ENCODE measurements at regions of chr1 and their contacts with region 1.

Region 1: DNA sequence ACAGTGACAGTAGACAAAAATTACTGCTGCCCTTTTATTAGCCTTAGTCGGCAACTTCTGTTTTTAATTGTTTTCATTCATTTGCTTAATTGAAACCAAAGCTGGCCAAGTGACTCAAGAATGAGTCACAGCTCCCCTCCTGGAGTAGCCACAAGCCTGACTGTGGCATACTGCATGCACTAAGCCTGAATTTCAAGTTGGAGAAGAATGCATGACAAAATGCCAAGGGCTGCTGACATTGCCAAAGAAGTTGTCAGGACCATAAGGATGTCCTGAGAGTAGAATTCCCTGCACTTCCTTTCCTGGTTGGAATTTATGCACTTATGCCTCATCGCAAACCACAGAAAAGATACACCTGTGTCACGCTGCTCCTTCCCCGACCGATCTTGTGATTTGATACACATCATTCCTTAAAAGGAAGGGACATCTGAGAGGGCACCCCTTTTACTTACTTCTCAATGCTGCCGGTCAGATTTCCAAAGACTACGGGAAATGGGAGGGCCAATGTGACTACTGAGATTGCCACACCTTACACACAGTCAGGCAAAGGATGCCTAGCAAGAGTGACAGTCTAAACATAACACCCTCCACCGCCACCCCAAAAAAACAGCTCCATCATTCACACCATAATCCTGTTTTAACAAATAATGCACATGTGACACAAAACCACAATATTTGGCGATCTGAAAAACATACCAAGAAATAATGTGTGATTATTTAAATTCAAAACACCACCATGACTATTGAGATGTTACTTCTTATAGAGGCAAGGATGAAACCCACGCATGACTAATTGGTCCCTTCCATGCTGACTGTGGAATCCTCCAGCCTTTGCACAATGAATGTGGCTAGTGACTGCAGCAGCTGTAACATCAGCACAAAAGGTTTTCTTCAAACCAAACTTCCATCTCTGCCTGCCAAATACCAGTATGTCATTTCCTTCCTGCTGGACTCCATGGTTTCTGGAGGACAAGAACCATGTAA is 28.2 kb downstream of the VAV3 start:
- DNase-seq: peak; percentile 64 to 71
- ATAC-seq: peak; percentile 84 to 92 (median 91)
- H3K4me3 ChIP-seq: no peak overlapping the region
- H3K4me3 Mint-ChIP-seq: peak overlapping the region; percentile 76
- H3K27ac ChIP-seq: peak overlapping the region; percentile 59
- H3K27ac Mint-ChIP-seq: peak overlapping the region; percentile 83 to 90
- H3K4me1 ChIP-seq: peaks cover 31% of the 10 kb centered on the region
- H3K4me1 Mint-ChIP-seq: peaks cover 82 to 87% of the 10 kb centered on the region in 2 donors
- H3K27me3 ChIP-seq: no peaks in the 10 kb centered on the region
- H3K27me3 Mint-ChIP-seq: no peaks in the 10 kb centered on the region
- CTCF ChIP-seq: no peak

Region 2: DNA sequence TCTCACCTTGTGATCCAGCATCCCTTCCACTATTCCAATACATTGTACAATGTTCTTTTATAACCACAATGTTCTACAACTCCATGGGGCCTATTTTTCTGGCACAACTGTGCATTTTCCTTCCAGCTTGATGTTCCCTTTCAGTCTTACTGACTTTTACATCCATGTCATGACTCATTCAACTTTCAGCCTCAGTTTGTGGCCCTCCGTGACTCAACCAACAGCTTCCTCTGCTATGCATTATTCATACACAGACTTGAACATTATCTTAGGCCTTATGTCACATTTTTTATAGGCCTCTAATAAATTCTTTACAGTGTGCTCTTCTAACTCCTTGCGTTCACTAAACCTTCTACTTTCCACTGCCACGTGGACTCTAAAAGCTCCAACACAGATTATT is 999.7 kb before region 1 on chr1:
- intact Hi-C with region 1: no loop called
- DNase-seq: no peak
- ATAC-seq: no peak
- H3K4me3 ChIP-seq: no peak overlapping the region
- H3K4me3 Mint-ChIP-seq: no peak overlapping the region
- H3K27ac ChIP-seq: no peak overlapping the region
- H3K27ac Mint-ChIP-seq: no peak overlapping the region
- H3K4me1 ChIP-seq: no peaks in the 10 kb centered on the region
- H3K4me1 Mint-ChIP-seq: no peaks in the 10 kb centered on the region
- H3K27me3 ChIP-seq: no peaks in the 10 kb centered on the region
- H3K27me3 Mint-ChIP-seq: no peaks in the 10 kb centered on the region
- CTCF ChIP-seq: no peak

Region 3: DNA sequence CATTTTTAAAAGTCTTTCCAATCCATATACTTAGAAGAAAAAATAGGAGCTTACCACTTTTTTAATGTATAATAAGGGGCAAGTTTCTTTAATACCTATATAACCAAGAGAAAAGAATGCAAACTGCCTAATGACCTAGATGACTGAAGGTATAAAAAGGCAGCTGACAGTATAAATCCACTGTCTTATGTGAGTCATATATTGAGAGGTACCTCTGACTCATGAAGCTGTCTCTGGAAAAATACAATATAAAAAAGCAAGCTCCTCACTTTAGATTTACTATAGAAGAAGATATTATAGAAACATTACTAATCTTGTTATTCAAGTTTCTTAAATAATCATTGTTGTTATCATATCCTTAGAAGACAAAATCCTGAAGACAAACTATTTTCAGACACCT is 116.0 kb before region 1 on chr1:
- intact Hi-C with region 1: loop called (anchors 2 kb)
- DNase-seq: no peak
- ATAC-seq: peak in 2 of 3 donors; percentile 57 to 61
- H3K4me3 ChIP-seq: no peak overlapping the region
- H3K4me3 Mint-ChIP-seq: peak overlapping the region; percentile 36
- H3K27ac ChIP-seq: peak overlapping the region; percentile 31
- H3K27ac Mint-ChIP-seq: peak overlapping the region; percentile 81 to 90
- H3K4me1 ChIP-seq: peaks cover 16% of the 10 kb centered on the region
- H3K4me1 Mint-ChIP-seq: peaks cover 67 to 68% of the 10 kb centered on the region in 2 donors
- H3K27me3 ChIP-seq: no peaks in the 10 kb centered on the region
- H3K27me3 Mint-ChIP-seq: no peaks in the 10 kb centered on the region
- CTCF ChIP-seq: no peak

Region 4: GRCh38 chr1:107840725-107841124 is 96.1 kb before region 1 on chr1:
- intact Hi-C with region 1: loop called (anchors 5 kb)
- DNase-seq: peak in 1 of 2 donors; percentile 46
- ATAC-seq: peak; percentile 53 to 70 (median 53)
- H3K4me3 ChIP-seq: peak overlapping the region; percentile 13
- H3K4me3 Mint-ChIP-seq: peak overlapping the region; percentile 75
- H3K27ac ChIP-seq: peak overlapping the region; percentile 82
- H3K27ac Mint-ChIP-seq: peak overlapping the region; percentile 87 to 89
- H3K4me1 ChIP-seq: peaks cover 31% of the 10 kb centered on the region
- H3K4me1 Mint-ChIP-seq: peaks cover 93 to 96% of the 10 kb centered on the region in 2 donors
- H3K27me3 ChIP-seq: no peaks in the 10 kb centered on the region
- H3K27me3 Mint-ChIP-seq: no peaks in the 10 kb centered on the region
- CTCF ChIP-seq: no peak

Region 5: DNA sequence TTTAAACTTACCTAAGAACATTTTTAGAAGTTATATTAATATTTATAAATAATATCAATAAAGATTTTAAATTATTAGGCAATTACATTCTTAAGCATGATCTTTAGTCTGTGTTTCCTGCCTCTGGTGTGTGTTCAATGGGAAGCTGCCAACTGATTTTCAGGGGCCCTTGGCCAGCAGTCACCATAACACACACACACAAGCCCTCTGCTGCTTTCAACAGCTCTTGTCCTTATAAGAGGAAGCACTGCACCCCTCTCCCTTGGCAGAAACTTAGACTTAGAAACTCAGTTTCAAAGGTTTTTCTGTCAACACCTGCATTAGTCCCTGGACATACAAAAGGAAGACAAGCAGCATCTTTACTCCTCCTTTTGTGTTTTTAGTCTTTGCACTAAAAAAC is 53.2 kb before region 1 on chr1:
- intact Hi-C with region 1: no loop called
- DNase-seq: no peak
- ATAC-seq: no peak
- H3K4me3 ChIP-seq: no peak overlapping the region
- H3K4me3 Mint-ChIP-seq: no peak overlapping the region
- H3K27ac ChIP-seq: no peak overlapping the region
- H3K27ac Mint-ChIP-seq: no peak overlapping the region
- H3K4me1 ChIP-seq: peaks cover 3% of the 10 kb centered on the region
- H3K4me1 Mint-ChIP-seq: peaks cover 54 to 71% of the 10 kb centered on the region in 2 donors
- H3K27me3 ChIP-seq: no peaks in the 10 kb centered on the region
- H3K27me3 Mint-ChIP-seq: no peaks in the 10 kb centered on the region
- CTCF ChIP-seq: no peak

Region 6: DNA sequence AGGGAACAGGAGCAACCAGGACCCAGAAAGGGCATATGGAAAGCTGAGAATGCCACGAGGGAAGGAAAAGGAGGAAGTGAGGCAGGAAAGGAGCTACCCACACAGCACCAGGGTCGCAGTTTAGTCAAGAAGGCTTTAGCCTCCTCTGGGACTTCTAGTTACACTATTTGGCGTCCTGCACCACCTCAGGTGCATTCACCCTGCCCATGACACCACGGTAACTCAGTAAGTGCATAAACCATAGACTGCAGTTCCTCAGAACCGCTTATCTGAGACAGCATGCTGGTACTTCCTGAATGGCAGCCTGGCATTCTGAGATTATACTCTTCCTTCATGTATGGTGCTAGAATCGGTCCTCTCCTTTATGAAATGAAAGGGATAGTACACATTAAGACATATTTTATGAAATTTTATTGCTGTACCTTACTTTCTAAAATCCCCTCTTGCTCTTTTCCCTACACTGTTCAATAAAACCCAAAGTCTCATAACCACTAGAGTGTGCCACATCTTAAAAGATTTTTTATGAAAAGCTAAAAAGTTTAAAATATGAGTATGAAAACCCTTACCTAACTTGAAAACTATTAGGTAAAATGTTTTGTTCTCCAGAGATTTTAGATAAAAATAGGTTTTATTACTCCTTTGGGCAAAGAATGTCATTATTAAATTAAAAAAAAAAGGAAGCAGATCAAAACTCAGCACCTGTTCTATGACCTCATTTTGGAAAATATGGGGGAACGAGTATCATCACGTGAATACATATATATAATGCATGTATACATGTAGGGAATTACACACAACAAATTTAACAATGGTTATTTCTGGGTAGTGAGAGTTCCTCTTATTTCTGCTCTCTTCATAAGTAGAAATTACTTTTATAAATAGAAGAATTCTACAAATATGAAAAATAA is 39.1 kb before region 1 on chr1:
- intact Hi-C with region 1: loop called (anchors 5 kb)
- DNase-seq: peak; percentile 21 to 45
- ATAC-seq: peak; percentile 67 to 70 (median 68)
- H3K4me3 ChIP-seq: no peak overlapping the region
- H3K4me3 Mint-ChIP-seq: peak overlapping the region; percentile 70
- H3K27ac ChIP-seq: peak overlapping the region; percentile 66
- H3K27ac Mint-ChIP-seq: peak overlapping the region; percentile 89 to 91
- H3K4me1 ChIP-seq: peaks cover 22% of the 10 kb centered on the region
- H3K4me1 Mint-ChIP-seq: peaks cover 77 to 85% of the 10 kb centered on the region in 2 donors
- H3K27me3 ChIP-seq: no peaks in the 10 kb centered on the region
- H3K27me3 Mint-ChIP-seq: no peaks in the 10 kb centered on the region
- CTCF ChIP-seq: no peak

Region 7: GRCh38 chr1:108079440-108080025 is 142.7 kb after region 1 on chr1:
- intact Hi-C with region 1: loop called (anchors 1 kb)
- DNase-seq: peak; percentile 21 to 67
- ATAC-seq: peak; percentile 39 to 47 (median 43)
- H3K4me3 ChIP-seq: no peak overlapping the region
- H3K4me3 Mint-ChIP-seq: peak overlapping the region; percentile 61
- H3K27ac ChIP-seq: peak overlapping the region; percentile 74
- H3K27ac Mint-ChIP-seq: peak overlapping the region; percentile 61 to 82
- H3K4me1 ChIP-seq: peaks cover 45% of the 10 kb centered on the region
- H3K4me1 Mint-ChIP-seq: peaks cover 62 to 63% of the 10 kb centered on the region in 2 donors
- H3K27me3 ChIP-seq: no peaks in the 10 kb centered on the region
- H3K27me3 Mint-ChIP-seq: no peaks in the 10 kb centered on the region
- CTCF ChIP-seq: no peak

Measured in natural killer cell (primary cell).